ENCODE measurements at regions of chr14 and their contacts with region 1.

Region 1: GRCh38 chr14:61080591-61081010 is 99.6 kb downstream of the SLC38A6 start:
- DNase-seq: no peak
- H3K4me3 ChIP-seq: no peak overlapping the region
- H3K27ac ChIP-seq: no peak overlapping the region
- H3K4me1 ChIP-seq: no peaks in the 10 kb centered on the region
- H3K27me3 ChIP-seq: no peaks in the 10 kb centered on the region
- CTCF ChIP-seq: no peak
- POLR2A ChIP-seq: no peak

Region 2: DNA sequence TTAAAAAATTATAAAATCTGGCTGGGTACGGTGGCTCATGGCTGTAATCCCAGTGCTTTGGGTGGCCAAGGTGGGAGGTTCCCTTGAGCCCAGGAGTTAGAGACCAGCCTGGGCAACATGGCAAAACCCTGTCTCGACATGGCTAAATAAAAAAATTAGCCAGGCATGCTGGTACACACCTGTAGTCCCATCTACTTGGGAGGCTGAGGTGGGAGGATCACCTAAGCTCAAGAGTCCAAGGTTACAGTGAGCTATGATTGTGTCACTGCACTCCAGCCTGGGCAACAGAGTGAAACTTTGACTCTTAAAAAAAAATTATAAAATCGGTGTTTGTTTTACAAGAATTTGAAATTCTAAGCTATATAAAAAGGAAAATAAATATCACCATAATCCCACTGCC is 42.3 kb after region 1 on chr14:
- intact Hi-C with region 1: loop called (anchors 2 kb)
- DNase-seq: no peak
- H3K4me3 ChIP-seq: no peak overlapping the region
- H3K27ac ChIP-seq: no peak overlapping the region
- H3K4me1 ChIP-seq: no peaks in the 10 kb centered on the region
- H3K27me3 ChIP-seq: no peaks in the 10 kb centered on the region
- CTCF ChIP-seq: no peak
- POLR2A ChIP-seq: no peak